Vagina (tissue), 2 donors: ENCODE measurements at regions of chr13 and their contacts with region 1.

Region 1: DNA sequence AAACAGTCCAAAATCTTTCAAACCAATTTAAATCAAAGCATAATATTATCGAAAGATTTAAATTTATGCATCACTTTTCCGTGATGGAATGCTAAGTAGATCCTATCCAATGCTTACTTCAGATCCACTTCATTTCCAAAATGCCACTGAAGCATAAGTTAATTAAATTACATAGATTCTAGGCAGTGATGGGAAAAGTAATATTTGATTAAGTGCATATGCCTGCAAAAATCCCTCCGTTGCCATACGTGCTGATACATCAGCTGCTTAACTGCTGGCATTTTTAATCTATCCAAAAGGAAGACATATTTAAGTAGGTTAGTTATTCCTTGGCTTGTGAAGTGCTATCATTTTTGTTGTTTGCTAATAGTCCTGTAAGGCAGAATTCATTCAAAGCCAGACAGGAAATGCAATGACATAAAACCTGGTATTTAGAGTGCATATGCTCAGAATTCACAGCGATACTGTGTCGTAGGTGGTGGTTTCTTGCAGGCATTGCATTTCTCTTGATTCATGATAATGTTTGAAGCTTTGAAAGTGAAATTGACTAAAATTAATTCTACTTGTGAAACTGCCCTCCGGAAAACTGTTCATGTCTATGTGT is 738.3 kb upstream of the GPC6 start:
- DNase-seq: no peak
- H3K4me3 ChIP-seq: no peak overlapping the region
- H3K27ac ChIP-seq: no peak overlapping the region
- H3K4me1 ChIP-seq: no peaks in the 10 kb centered on the region
- H3K27me3 ChIP-seq: no peaks in the 10 kb centered on the region
- CTCF ChIP-seq: no peak
- POLR2A ChIP-seq: no peak

Region 2: GRCh38 chr13:92097337-92097903 is 390.9 kb before region 1 on chr13:
- intact Hi-C with region 1: no loop called
- DNase-seq: no peak
- H3K4me3 ChIP-seq: no peak overlapping the region
- H3K27ac ChIP-seq: no peak overlapping the region
- H3K4me1 ChIP-seq: no peaks in the 10 kb centered on the region
- H3K27me3 ChIP-seq: no peaks in the 10 kb centered on the region
- CTCF ChIP-seq: no peak
- POLR2A ChIP-seq: no peak

Region 3: GRCh38 chr13:92743992-92744391 is 255.6 kb after region 1 on chr13:
- intact Hi-C with region 1: loop called (anchors 5 kb)
- DNase-seq: no peak
- H3K4me3 ChIP-seq: no peak overlapping the region
- H3K27ac ChIP-seq: no peak overlapping the region
- H3K4me1 ChIP-seq: no peaks in the 10 kb centered on the region
- H3K27me3 ChIP-seq: no peaks in the 10 kb centered on the region
- CTCF ChIP-seq: no peak
- POLR2A ChIP-seq: no peak